ENCODE measurements at regions of chr12 and their contacts with region 1.

Region 1: GRCh38 chr12:51744235-51744634 is 104.3 kb downstream of the FIGNL2 start:
- DNase-seq: peak; percentile 91
- H3K4me3 ChIP-seq: no peak overlapping the region
- H3K27ac ChIP-seq: peak overlapping the region; percentile 77
- H3K4me1 ChIP-seq: peaks cover 20% of the 10 kb centered on the region
- H3K27me3 ChIP-seq: no peaks in the 10 kb centered on the region
- CTCF ChIP-seq: no peak
- POLR2A ChIP-seq: no peak

Region 2: DNA sequence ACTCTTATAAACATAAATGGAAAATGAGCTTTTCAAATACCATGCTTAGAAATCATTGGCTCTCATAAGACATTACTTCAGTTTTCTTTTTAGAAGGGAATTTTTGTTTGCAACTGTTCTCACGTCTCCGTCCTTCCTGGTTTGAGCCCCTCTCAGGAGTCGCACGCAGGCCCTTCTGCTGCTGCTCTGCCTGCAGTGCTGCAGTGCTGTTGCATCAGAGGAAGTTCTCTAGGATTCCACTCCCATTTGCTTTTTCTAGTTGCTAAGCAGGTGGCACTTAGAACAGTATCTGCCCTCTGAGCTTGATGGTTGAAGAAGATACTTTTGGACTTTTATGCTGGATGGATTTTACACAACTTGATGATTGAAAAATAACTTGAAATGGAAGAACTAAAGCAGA is 82.4 kb before region 1 on chr12:
- CTCF ChIA-PET with region 1: no interaction called
- POLR2A ChIA-PET with region 1: no interaction called
- dilution Hi-C with region 1: no loop called
- intact Hi-C with region 1: no loop called
- DNase-seq: no peak
- H3K4me3 ChIP-seq: no peak overlapping the region
- H3K27ac ChIP-seq: no peak overlapping the region
- H3K4me1 ChIP-seq: no peaks in the 10 kb centered on the region
- H3K27me3 ChIP-seq: peaks cover 0 to 3% of the 10 kb centered on the region in 2 experiments
- CTCF ChIP-seq: no peak
- POLR2A ChIP-seq: no peak

Region 3: GRCh38 chr12:51868821-51869502 is 124.7 kb after region 1 on chr12:
- CTCF ChIA-PET with region 1: no interaction called
- POLR2A ChIA-PET with region 1: no interaction called
- dilution Hi-C with region 1: no loop called
- intact Hi-C with region 1: no loop called
- DNase-seq: no peak
- H3K4me3 ChIP-seq: peak overlapping the region; percentile 13 to 23 (median 22)
- H3K27ac ChIP-seq: no peak overlapping the region
- H3K4me1 ChIP-seq: peaks cover 6% of the 10 kb centered on the region
- H3K27me3 ChIP-seq: no peaks in the 10 kb centered on the region
- CTCF ChIP-seq: no peak
- POLR2A ChIP-seq: no peak

Region 4: DNA sequence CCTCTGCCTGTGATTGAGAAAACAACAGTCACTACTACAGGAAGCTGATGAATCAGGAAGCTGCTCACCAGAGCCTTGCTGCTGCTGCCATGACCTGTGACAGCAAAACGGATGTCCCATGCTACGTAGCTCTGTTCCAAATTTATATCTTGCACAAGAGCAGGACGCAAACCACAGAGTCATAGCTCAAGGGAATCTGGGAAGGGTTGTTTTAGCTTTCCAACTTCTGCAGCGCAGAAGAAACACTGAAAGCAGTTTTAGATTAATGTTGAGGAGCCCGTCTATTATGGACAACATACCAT is 141.7 kb after region 1 on chr12:
- CTCF ChIA-PET with region 1: no interaction called
- POLR2A ChIA-PET with region 1: no interaction called
- dilution Hi-C with region 1: no loop called
- intact Hi-C with region 1: loop called (anchors 5 kb)
- DNase-seq: peak; percentile 98
- H3K4me3 ChIP-seq: peak overlapping the region in 1 of 3 experiments; percentile 7
- H3K27ac ChIP-seq: peak overlapping the region; percentile 89
- H3K4me1 ChIP-seq: peaks cover 41% of the 10 kb centered on the region
- H3K27me3 ChIP-seq: no peaks in the 10 kb centered on the region
- CTCF ChIP-seq: no peak
- POLR2A ChIP-seq: peak; percentile 76

Region 5: GRCh38 chr12:51980051-51980808 is 236.0 kb after region 1 on chr12:
- CTCF ChIA-PET with region 1: no interaction called
- POLR2A ChIA-PET with region 1: no interaction called
- dilution Hi-C with region 1: no loop called
- intact Hi-C with region 1: no loop called
- DNase-seq: peak; percentile 84
- H3K4me3 ChIP-seq: no peak overlapping the region
- H3K27ac ChIP-seq: no peak overlapping the region
- H3K4me1 ChIP-seq: peaks cover 36% of the 10 kb centered on the region
- H3K27me3 ChIP-seq: no peaks in the 10 kb centered on the region
- CTCF ChIP-seq: peak; percentile 90 to 97
- POLR2A ChIP-seq: no peak

Measured in endothelial cell of umbilical vein (primary cell).